Right ventricle myocardium inferior (tissue), 1 donor: ENCODE measurements at regions of chr15 and their contacts with region 1.

Region 1: DNA sequence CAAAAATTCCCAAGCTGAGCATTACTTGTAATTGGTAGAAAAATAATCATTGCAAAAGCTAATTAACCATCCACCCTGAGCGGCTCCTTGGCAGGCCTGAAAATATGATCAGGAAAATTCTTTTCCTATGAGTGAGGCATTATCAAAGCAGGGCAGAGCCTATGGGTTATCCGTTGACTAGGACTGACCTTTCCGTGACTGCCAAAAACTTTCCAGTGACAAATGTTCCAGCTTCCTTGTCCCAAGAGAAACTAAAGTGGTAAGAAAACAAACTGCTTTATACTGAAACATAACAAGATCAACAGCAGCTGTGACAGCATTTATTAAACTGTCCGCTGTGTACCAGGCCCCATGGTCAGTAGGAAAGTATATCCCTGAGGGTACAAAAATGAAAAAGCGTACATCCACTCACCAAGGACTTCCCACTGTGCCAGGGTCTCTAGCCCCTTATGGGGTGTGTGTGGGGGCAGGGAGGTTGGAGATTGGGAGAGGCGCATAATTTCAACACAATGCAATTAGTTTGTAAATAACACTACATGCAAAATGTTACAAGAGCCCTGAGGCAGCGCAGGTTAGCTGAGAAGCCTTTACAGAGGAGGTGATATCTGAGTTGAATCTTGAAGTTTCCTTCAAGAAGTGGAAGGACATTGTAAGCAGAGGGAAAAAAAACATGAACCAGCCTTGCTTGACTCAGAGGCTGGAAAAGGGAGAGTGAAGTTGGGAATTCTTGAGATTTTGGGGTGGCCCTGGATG is 8.5 kb downstream of the LIPC start:
- DNase-seq: no peak
- ATAC-seq: peak; percentile 85

Region 2: DNA sequence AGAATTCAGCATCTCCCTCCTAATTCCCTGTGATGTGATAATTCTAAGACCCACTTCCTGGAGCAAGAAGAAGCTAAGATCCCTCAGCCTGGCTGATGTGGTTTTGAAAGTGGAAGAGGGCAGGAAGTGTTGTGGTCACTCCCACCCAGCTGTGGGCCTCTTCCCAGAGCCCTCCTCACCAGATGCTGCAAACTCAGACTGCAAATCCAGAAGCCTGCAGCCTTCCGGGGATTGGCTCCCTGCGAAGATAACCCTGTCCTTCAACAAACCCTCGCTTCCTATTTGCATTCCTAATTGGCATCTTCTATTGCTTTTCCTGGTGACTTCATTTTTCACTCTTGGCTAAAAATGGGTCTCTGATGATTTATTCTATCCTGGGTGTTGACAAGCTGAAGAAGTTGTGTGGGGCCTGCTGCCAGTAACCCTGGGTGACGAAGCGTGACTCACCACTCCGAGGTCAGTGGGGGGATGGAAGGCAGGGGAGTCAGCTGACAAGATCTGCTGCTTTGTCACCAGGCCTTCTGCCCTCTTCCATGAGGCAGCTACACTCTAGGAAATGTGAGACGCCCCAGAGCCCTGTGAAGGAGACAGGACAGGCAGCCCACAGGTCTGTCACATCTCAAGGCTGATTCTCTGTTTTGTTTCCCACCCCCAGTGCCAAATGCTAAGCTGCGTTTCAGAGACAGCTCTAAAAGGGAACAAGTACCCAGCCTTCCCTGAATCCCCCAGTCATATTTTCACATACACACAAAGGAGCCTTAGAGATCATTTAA is 108.2 kb before region 1 on chr15:
- intact Hi-C with region 1: loop called (anchors 2 kb)
- DNase-seq: peak; percentile 94
- ATAC-seq: peak; percentile 98

Region 3: DNA sequence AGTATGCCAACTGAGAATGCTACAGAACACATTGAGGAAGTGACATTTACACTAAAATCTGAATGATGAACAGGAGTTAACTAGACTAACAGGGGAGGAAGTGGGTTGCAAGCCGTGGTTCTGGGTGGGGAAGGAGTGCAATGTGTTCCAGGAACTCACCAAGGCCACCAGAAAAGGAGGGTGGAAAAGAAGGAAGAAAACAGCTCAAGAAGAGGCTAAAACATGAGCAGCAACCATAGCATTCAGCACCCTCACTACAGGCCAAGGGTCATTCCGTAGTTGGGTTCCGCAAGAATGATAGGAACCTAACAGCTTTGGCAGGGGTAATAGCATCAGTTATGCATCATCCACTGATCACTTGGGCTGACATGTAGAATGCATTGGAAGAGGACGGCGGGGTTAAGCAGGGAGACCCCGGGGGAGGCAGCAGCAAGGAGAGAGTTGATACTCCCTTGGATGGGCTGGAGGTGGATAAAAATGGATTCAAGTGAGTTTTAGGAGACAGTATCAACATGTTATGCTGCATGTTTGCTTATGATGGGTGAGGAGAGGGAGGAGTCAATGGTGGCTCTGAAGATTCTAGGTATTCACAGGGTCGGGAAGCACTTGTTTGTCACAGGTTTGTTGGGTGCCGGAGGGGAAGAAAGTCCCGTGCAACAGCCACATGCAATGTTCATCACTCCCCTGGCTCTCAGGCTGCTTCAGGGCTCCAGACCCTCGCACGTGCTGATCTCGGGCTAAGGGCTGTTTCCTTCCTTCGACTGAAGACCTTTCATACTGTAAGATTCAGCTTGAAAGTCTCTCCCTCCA is 44.7 kb after region 1 on chr15:
- intact Hi-C with region 1: loop called (anchors 5 kb)
- DNase-seq: no peak
- ATAC-seq: no peak

Region 4: DNA sequence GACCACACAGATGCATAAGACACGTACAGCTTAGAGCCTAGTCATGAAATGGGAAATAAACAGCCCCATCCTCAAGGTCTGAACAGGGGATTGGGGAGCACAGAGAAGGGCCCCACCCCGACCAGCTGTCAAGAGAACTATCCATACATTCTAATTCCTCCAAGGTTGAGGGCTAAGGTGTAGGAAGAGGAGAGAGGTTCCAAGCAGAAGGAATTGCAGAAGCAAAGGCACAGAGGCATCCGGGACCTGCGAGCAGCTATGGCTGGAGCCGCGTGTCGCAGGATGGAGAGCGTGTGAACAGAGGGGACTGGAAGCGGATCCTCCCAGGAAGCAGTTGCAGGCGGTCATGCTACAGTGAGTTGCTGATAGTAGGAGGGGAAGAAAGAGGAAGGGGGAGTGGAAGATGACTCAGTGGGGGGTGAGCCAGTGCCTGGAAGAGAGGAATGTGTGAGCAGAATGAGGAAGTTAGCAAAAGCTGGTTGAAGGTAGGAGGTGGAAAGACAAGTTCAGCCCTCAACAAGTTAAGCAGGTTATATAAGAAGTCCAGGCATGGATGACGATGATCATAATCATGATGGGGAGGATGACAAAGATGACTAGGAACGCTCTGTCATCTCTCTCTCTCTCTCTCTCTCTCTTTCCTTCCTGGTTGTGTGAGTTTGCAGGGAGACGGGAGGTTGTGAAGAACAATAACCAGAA is 81.1 kb after region 1 on chr15:
- intact Hi-C with region 1: loop called (anchors 5 kb)
- DNase-seq: peak; percentile 70
- ATAC-seq: peak; percentile 25